ENCODE measurements at regions of chr10 and their contacts with region 1.

Region 1: GRCh38 chr10:80382989-80383388 is 25.4 kb upstream of the PRXL2A start:
- DNase-seq: peak; percentile 44
- ATAC-seq: peak; percentile 56
- H3K4me3 Mint-ChIP-seq: no peak overlapping the region
- H3K27ac Mint-ChIP-seq: 0 out of 2 replicates have a peak overlapping the region, but pooled peaks have one; percentile 12
- H3K4me1 Mint-ChIP-seq: peaks cover 5% of the 10 kb centered on the region; the same call in 1 of the 2 replicates
- H3K27me3 Mint-ChIP-seq: no peaks in the 10 kb centered on the region
- CTCF ChIP-seq: no peak; the same call in 1 of the 2 replicates

Region 2: DNA sequence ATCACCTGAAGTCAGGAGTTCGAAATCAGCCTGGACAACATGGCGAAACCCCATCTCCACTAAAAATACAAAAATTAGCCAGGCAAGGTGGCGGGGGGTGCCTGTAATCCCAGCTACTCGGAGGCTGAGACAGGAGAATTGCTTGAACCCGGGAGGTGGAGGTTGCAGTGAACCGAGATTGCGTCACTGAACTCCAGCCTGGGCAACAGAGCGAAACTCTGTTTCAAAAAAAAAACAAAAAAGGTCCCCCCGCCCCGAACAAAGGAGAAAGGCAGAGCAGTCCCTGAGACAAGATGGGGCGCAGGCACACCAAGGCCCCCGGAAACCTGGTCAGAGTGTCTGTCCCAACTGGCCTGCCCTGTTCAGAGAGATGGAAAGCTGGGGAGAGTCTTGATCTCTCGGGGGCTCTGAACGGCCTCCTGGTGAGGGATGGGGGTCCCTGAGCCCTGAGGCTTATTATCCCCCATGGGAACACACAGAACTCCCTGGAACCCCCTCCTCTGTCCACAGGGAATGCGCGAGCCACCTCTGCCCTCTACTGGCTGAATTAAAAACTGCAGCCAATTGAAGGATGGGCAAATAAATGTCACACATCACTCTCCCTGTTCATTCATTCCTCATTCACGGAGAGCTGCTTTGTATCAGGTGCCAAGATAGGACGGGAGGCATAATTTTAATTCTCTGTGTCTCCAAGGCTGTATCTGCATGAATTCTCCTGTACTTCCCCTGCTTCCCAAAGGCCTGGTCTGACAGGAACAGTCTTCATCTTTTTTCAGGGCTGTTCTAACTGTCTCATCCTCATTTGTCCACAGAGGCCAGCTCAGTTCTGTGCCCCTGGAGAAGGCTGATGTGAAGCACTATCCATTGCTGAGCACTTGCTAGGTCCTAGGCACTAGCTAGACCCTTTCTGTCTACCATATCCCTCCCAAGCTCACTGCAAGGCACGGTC is 122.4 kb before region 1 on chr10:
- CTCF ChIA-PET with region 1: interaction called, 10 read pairs
- POLR2A ChIA-PET with region 1: no interaction called
- DNase-seq: peak; percentile 70
- ATAC-seq: peak; percentile 26
- H3K4me3 Mint-ChIP-seq: no peak overlapping the region
- H3K27ac Mint-ChIP-seq: no peak overlapping the region
- H3K4me1 Mint-ChIP-seq: peaks cover 17% of the 10 kb centered on the region
- H3K27me3 Mint-ChIP-seq: peaks cover 15% of the 10 kb centered on the region
- CTCF ChIP-seq: peak; percentile 79

Region 3: DNA sequence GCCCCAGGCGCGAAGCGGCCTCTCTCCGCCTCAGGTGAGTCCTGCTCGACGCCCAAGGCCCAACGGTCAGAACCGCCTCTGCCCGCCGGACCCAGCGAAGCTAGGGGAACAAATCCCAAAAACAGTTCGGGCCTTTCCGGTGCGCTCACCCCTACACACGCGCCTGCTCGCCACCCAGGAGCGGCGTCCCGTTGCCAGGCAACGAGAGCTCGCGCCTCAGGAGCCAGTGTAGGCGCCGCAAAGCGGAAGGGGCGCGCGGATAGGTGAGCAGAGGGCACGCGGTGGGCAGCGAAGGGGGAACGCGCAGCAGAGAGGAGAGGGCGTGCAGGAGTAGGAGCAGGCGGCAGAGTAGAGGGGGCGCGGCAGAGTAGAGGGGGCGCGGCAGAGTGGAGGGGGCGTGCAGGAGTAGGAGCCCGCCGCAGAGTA is 26.4 kb before region 1 on chr10 and contains the starts of genes DYDC1 and DYDC2:
- CTCF ChIA-PET with region 1: interaction called, 14 read pairs
- POLR2A ChIA-PET with region 1: no interaction called
- DNase-seq: peak; percentile 88
- ATAC-seq: peak; percentile 93
- H3K4me3 Mint-ChIP-seq: peak within 1 kb of the TSS; percentile 83
- H3K27ac Mint-ChIP-seq: no peak within 1 kb of the TSS
- H3K4me1 Mint-ChIP-seq: peaks cover 18% of the 10 kb centered on the region
- H3K27me3 Mint-ChIP-seq: peaks cover 43% of the 10 kb centered on the region
- CTCF ChIP-seq: no peak
- total RNA-seq, gene DYDC1: 0.50 to 0.52 TPM in 2 of 3 replicates, not detected in the other
- total RNA-seq, gene DYDC2: 1.9 to 3.3 TPM (median 2.4 TPM) in 3 replicates

Region 4: DNA sequence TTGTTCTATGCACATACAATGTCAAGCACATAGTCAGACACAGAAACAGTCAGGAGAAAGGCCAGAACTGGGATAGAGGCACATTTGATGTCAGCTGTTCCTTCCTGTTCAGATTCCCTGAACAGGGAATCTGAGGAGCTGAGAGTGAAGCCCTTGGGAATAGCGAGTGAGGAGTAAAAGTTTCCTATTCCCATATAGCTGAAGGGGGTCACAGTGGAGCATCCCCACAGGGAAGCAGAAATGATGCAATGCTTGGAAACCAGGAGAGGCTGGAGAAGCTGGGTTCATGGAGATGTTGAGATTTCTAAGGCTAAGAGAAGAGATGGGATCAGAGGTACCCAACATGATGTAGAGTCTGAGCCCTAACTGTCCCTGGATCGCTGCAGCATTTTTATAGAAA is 14.0 kb after region 1 on chr10:
- CTCF ChIA-PET with region 1: interaction called, 10 read pairs
- POLR2A ChIA-PET with region 1: no interaction called
- DNase-seq: no peak
- ATAC-seq: no peak
- H3K4me3 Mint-ChIP-seq: no peak overlapping the region
- H3K27ac Mint-ChIP-seq: no peak overlapping the region
- H3K4me1 Mint-ChIP-seq: no peaks in the 10 kb centered on the region
- H3K27me3 Mint-ChIP-seq: 0 out of 2 replicates have a peak, but pooled peaks cover 2% of the 10 kb centered on the region
- CTCF ChIP-seq: no peak

Region 5: DNA sequence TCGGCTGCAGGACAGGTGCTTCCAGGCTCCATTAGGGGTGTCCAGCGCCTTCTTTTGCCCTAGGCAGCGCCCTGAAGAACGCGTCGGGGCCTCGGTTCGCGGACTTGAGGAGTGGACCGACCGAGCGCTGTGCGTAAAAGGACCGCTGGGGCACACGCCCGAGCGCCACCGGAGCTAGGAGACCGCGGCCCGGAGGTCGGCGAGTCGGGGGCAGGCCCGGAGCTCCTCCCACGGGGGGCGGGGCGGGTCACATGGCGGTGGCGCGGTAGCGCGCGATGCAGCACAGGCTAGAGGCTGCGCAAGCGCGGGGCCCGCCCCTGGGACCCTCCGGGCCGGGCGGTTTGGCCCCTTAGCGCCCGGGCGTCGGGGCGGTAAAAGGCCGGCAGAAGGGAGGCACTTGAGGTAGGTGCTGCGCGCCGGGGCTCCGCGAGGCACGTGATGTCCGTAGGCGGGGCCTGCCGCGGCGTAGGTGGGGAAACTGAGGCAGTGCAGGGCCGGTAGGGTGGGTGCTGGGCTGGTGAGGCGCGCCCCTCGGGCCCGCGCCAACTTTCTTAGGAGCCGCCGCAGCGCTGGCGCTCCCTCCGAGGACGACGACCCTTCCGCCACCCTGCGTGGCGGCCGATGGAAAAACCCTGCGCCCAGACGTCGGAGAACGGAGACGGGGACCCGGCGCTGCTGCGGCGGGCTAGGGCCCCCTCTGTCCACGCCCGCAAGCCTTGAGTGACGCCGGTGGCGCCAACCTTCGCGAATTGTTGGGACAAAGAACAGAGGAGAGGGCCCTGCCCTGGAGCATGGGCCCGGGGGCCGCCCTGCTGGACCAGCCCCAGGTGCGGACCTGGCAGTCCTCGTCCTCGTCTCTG is 25.5 kb after region 1 on chr10 and contains the start of gene PRXL2A:
- CTCF ChIA-PET with region 1: interaction called, 15 read pairs
- POLR2A ChIA-PET with region 1: no interaction called
- DNase-seq: peak; percentile 94
- ATAC-seq: peak; percentile 95
- H3K4me3 Mint-ChIP-seq: peak within 1 kb of the TSS; percentile 88
- H3K27ac Mint-ChIP-seq: peak within 1 kb of the TSS; percentile 60
- H3K4me1 Mint-ChIP-seq: peaks cover 44% of the 10 kb centered on the region
- H3K27me3 Mint-ChIP-seq: peaks cover 26% of the 10 kb centered on the region
- CTCF ChIP-seq: no peak
- total RNA-seq, gene PRXL2A: 46.6 to 56.5 TPM (median 52.4 TPM) in 3 replicates

Region 6: GRCh38 chr10:80444646-80445319 is 61.8 kb after region 1 on chr10:
- CTCF ChIA-PET with region 1: interaction called, 32 read pairs
- POLR2A ChIA-PET with region 1: no interaction called
- DNase-seq: peak; percentile 50
- ATAC-seq: peak; percentile 89
- H3K4me3 Mint-ChIP-seq: no peak overlapping the region
- H3K27ac Mint-ChIP-seq: no peak overlapping the region
- H3K4me1 Mint-ChIP-seq: peaks cover 19% of the 10 kb centered on the region
- H3K27me3 Mint-ChIP-seq: no peaks in the 10 kb centered on the region
- CTCF ChIP-seq: no peak